ENCODE measurements at regions of chr11 and their contacts with region 1.

Region 1: GRCh38 chr11:64448599-64449556 is 89.9 kb downstream of the RPS6KA4 start:
- DNase-seq: peak; percentile 81
- ATAC-seq: peak; percentile 88
- H3K4me3 Mint-ChIP-seq: peak overlapping the region; percentile 41
- H3K27ac Mint-ChIP-seq: no peak overlapping the region
- H3K4me1 Mint-ChIP-seq: peaks cover 17% of the 10 kb centered on the region
- H3K27me3 Mint-ChIP-seq: peaks cover 34% of the 10 kb centered on the region

Region 2: DNA sequence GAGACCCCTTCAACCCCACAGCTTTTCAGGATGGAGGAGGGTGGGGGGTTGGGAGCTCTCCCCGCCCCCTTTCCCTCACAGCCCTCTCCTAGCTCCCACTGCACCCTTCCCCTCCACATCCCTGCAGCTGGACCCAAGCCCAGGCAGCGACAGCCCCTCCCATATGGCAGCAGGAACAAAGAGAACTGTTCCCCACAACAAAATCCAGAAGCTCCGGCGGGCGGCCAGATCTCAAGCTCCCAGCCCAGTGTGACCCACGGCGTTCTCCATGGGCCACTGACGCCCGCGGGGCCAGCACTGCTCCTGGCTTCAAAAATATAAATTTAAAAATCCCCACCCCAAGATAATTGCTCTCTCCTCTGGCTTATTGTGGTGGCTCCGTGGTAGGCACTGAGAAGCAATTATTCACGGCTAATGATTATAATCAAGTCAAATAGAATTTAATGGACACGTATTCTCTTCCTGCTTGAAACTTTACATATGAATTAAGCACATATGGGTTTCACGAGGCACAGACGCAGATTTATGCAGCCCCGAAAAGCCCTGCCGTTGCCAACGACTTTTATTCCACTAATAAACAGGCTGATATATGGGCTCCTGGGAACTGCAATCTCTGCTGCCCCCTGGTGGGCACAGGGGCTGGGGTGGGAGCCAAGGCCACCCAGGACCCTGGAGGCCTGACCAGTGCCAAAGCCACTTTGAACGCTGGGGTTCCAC is 300.5 kb before region 1 on chr11:
- CTCF ChIA-PET with region 1: no interaction called
- DNase-seq: peak; percentile 79
- ATAC-seq: peak; percentile 59
- H3K4me3 Mint-ChIP-seq: no peak overlapping the region
- H3K27ac Mint-ChIP-seq: no peak overlapping the region
- H3K4me1 Mint-ChIP-seq: peaks cover 3% of the 10 kb centered on the region
- H3K27me3 Mint-ChIP-seq: no peaks in the 10 kb centered on the region

Region 3: DNA sequence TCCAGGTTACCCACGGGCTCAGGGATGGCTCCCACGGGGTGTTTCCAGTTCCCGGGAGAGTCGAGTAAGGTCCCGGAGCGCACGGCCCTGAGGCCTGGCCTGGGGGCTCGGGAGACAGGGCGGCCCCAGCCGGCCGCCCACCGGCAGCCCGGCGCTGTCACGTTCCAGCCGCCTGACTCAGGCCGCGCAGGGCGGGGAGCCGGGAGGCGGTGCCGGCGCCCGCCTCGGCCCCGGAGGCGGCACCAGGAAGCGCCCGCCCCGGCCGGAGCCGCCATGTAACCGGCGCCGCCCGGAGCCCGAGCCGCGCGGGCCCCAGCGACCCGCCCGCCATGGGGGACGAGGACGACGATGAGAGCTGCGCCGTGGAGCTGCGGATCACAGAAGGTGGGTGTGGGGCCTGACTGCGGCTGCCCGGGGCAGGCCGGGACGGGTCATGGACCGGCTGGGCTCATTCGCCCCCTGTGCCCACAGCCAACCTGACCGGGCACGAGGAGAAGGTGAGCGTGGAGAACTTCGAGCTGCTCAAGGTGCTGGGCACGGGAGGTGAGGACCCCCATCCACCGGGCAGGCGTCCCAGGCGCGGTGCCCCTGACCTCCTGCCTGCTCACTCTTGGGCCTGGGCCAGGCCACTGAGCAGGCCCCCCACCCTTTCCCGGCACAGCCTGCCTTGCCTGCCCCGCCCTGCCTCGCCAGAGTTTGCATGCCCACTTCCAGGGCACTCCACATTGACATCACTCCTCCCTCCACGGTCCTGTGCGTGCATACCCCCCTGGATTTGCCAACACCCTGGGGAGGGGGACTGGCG is 89.8 kb before region 1 on chr11 and contains the start of gene RPS6KA4:
- CTCF ChIA-PET with region 1: interaction called, 26 read pairs
- DNase-seq: no peak
- ATAC-seq: peak; percentile 91
- H3K4me3 Mint-ChIP-seq: peak within 1 kb of the TSS; percentile 86
- H3K27ac Mint-ChIP-seq: peak within 1 kb of the TSS; percentile 81
- H3K4me1 Mint-ChIP-seq: peaks cover 41% of the 10 kb centered on the region
- H3K27me3 Mint-ChIP-seq: no peaks in the 10 kb centered on the region
- total RNA-seq, gene RPS6KA4: 31.1 to 41.9 TPM

Region 4: DNA sequence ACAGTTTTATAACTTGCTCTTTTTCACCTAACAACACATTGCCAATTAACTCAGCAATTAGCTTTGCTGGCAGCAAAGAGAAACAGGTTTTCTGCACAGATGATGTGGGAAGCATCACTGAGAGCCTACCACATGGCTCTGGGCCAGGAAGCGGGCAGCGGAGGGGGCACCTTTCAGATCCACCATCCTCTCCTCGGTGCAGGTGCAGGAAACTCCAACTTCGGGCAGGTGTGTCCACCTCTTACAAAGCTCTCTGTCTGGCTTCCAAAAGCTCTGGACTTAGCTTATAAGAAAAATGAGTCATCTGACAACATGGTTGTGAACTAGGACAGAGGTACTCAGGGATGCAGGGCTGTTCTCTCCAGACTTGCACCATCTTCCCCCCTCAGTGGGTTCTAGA is 12.9 kb before region 1 on chr11:
- CTCF ChIA-PET with region 1: interaction called, 38 read pairs
- DNase-seq: no peak
- ATAC-seq: no peak
- H3K4me3 Mint-ChIP-seq: no peak overlapping the region
- H3K27ac Mint-ChIP-seq: no peak overlapping the region
- H3K4me1 Mint-ChIP-seq: no peaks in the 10 kb centered on the region
- H3K27me3 Mint-ChIP-seq: peaks cover 25% of the 10 kb centered on the region

Region 5: DNA sequence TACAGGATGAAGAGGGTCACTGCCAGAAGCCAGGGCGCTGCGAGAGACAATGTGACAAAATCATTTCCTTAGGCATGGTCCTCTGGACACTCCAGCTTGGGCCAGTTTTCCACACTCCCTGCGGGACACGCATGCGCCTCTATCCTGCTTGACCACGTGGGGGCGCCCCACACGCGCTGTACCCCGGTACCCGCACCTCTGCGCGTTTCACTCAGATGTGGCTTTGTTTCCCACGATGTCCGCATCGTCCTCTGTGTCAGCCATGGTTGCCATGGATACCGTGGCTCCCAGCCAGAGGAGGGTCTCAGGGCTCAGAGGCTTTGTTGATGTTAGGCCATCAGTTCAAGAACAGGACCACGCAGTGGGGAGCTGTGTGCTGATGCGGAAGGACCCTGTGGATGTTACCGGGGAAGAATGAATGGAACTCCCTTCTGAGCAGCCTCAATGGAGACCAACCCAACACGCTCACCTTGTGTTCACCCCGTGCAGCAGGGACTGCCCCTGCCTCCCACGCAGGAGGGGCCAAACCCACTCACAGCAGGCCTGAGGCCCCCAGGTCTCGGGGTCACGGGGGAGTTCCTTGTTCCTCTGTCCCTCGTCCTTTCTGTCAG is 41.1 kb after region 1 on chr11:
- CTCF ChIA-PET with region 1: interaction called, 11 read pairs
- DNase-seq: peak; percentile 59
- ATAC-seq: peak; percentile 60
- H3K4me3 Mint-ChIP-seq: no peak overlapping the region
- H3K27ac Mint-ChIP-seq: no peak overlapping the region
- H3K4me1 Mint-ChIP-seq: peaks cover 11% of the 10 kb centered on the region
- H3K27me3 Mint-ChIP-seq: peaks cover 56% of the 10 kb centered on the region

Region 6: DNA sequence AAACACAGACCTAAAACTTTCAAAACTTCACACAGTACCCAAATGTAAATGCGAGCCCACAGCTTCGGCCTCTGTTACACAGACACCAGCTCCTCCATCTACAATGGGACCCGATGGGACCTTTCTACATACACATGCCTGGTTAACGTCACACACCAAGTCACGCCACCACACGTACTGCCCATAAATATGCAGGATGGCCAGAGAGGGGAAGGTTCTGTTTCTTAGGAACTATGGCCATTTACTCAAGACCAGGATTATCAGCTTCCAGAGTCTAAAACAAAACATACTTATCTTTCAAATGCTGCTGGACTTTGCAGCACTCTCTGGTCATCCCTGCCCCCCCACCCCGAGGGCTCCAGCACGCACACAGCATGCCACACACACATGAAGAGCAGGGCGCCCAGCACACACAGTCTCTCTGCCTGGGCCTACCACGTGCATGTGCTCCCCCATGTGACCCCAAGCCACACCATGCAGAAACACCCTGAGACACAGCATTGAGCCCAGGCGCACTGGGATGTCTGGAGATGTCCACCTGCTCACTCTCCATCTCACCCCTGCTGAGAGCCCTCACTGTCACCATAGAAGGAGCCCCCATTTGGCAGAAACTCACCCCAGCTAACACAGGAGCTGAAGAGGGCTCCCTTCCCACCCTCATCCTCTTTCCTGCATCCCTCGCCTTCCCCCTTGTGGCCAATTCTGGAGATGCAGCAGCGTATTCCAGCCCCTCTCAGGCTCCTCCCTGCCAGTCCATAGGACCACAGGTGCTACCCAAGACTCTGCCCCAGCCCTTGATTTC is 203.9 kb after region 1 on chr11:
- CTCF ChIA-PET with region 1: interaction called, 15 read pairs
- DNase-seq: peak; percentile 82
- ATAC-seq: peak; percentile 74
- H3K4me3 Mint-ChIP-seq: no peak overlapping the region
- H3K27ac Mint-ChIP-seq: no peak overlapping the region
- H3K4me1 Mint-ChIP-seq: no peaks in the 10 kb centered on the region
- H3K27me3 Mint-ChIP-seq: peaks cover 5% of the 10 kb centered on the region

Measured in activated CD8-positive, alpha-beta memory T cell treated with anti-CD3 and anti-CD28 coated beads, Interleukin-2, amount 10 ng/mL, durations not matched to agents 7 days and 5 days (primary cell).